Activated naive CD4-positive, alpha-beta T cell treated with anti-CD3 and anti-CD28 coated beads for 36 hours (primary cell): ENCODE measurements at regions of chr7 and their contacts with region 1.

Region 1: GRCh38 chr7:80018941-80019752 is 115.5 kb upstream of the GNAI1 start:
- DNase-seq: peak; percentile 61
- H3K4me3 Mint-ChIP-seq: no peak overlapping the region
- H3K27ac Mint-ChIP-seq: no peak overlapping the region
- H3K4me1 Mint-ChIP-seq: no peaks in the 10 kb centered on the region
- H3K27me3 Mint-ChIP-seq: no peaks in the 10 kb centered on the region

Region 2: DNA sequence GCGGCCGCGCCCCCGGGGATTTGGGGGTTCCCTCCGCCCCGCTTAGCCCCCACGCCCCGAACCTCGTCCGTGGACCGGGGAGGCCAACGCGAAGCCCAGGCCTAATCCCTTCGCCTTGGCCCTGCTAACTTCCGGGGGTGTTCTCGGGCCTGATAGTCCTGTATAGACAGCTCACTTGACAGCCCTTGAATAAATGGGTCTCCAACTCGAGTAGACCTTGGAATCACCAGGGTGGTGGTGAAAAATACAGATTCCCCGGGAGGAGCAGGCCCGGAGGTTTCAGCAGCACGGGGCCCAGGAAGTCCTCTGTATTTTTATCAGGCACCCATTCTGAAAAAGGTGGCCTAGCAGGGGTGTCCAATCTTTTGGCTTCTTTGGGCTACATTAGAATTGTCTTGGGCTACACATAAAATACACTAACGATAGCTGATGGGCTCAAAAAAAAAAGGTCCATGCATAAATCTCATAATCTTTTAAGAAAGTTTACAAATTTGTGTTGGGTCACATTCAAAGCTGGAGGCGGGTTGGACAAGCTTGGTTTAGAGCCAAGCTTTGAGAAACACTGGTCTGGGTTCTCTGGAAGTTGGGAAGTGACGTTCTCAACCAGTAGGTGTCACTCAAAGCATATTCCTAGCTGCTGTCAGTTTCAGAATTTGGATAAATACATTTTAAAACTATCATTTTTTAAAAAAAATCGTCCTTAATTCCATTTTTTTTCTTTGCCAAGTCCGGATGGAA is 1998.8 kb before region 1 on chr7:
- CTCF ChIA-PET with region 1: no interaction called
- intact Hi-C with region 1: loop called (anchors 2 kb)
- DNase-seq: peak; percentile 59
- H3K4me3 Mint-ChIP-seq: peak overlapping the region; percentile 64
- H3K27ac Mint-ChIP-seq: no peak overlapping the region
- H3K4me1 Mint-ChIP-seq: peaks cover 9% of the 10 kb centered on the region
- H3K27me3 Mint-ChIP-seq: peaks cover 32% of the 10 kb centered on the region

Region 3: DNA sequence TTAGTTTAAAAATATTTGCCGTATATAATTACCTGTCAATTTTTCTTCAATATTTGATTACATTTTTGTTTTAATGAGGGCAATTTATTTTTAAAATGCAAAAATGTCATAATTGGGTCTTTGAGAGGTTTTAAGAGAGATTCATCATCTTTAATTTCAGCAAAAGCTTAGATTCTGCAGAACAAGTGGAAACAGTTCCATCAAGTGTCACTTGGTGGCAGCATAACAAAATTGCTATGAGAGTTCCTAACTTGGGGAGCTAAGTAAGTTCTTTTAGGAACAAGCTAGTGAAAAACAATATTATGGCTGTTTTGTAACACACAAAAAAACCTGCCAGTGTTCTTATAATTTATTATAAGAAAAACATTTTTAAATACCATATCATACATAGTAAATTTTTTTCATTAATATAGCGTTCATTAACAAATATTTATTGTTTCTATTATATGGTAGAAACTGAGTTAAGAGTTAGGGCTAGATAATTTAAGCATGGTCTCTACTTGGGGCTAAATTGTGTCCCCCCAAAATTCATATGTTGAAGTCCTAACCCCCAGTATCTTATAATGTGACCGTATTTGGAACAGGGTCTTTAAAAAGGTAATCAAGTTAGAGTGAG is 720.9 kb before region 1 on chr7:
- CTCF ChIA-PET with region 1: no interaction called
- intact Hi-C with region 1: loop called (anchors 1 kb)
- DNase-seq: peak; percentile 13
- H3K4me3 Mint-ChIP-seq: no peak overlapping the region
- H3K27ac Mint-ChIP-seq: no peak overlapping the region
- H3K4me1 Mint-ChIP-seq: no peaks in the 10 kb centered on the region
- H3K27me3 Mint-ChIP-seq: no peaks in the 10 kb centered on the region

Region 4: DNA sequence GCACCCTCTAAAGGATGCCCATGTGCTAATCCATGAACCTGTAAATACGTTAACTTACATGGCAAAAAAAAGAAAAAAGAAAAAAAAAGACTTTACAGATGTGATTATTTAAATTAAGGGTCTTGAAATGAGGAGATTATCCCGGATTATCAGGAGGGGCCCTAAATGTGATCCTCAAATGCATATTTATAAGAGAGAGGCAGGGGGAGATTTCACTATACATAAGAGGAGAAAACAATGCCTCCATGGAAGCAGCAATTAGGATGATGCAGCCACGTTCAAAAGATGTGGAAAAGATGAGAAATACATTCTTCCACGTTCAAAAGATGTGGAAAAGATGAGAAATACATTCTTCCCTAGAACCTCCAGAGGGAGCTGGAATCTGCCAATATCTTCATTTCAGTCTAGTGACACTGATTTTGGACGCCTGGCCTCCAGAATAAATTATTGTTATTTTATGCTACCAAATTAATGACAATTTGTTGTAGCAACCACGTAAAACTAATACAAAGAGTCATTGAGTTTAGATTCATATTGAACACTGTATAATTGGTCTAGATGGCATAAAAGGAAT is 212.9 kb before region 1 on chr7:
- CTCF ChIA-PET with region 1: no interaction called
- intact Hi-C with region 1: loop called (anchors 5 kb)
- DNase-seq: no peak
- H3K4me3 Mint-ChIP-seq: no peak overlapping the region
- H3K27ac Mint-ChIP-seq: no peak overlapping the region
- H3K4me1 Mint-ChIP-seq: no peaks in the 10 kb centered on the region
- H3K27me3 Mint-ChIP-seq: no peaks in the 10 kb centered on the region

Region 5: GRCh38 chr7:79909176-79909575 is 110.0 kb before region 1 on chr7:
- CTCF ChIA-PET with region 1: no interaction called
- intact Hi-C with region 1: loop called (anchors 10 kb)
- DNase-seq: peak; percentile 17
- H3K4me3 Mint-ChIP-seq: no peak overlapping the region
- H3K27ac Mint-ChIP-seq: no peak overlapping the region
- H3K4me1 Mint-ChIP-seq: peaks cover 43% of the 10 kb centered on the region
- H3K27me3 Mint-ChIP-seq: no peaks in the 10 kb centered on the region

Region 6: DNA sequence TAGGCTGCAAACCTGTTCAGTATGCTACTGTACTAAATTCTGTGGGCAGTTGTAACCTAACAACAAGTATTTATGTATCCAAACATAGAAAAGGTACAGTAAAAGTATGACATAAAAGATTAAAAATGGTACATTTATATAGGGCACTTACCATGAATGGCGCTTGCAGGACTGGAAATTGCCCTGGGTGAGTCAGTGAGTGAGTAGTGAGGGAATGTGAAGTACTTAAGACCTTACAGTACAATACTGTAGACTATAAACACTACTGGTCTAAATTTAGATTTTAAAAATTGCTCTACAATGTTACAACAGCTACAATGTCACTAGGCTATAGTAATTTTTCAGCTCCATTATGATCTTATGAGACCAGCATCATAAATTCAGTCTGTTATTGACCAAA is 30.5 kb before region 1 on chr7:
- CTCF ChIA-PET with region 1: no interaction called
- intact Hi-C with region 1: no loop called
- DNase-seq: no peak
- H3K4me3 Mint-ChIP-seq: no peak overlapping the region
- H3K27ac Mint-ChIP-seq: no peak overlapping the region
- H3K4me1 Mint-ChIP-seq: no peaks in the 10 kb centered on the region
- H3K27me3 Mint-ChIP-seq: no peaks in the 10 kb centered on the region

Region 7: GRCh38 chr7:80175744-80176143 is 156.6 kb after region 1 on chr7:
- CTCF ChIA-PET with region 1: no interaction called
- intact Hi-C with region 1: no loop called
- DNase-seq: no peak
- H3K4me3 Mint-ChIP-seq: no peak overlapping the region
- H3K27ac Mint-ChIP-seq: no peak overlapping the region
- H3K4me1 Mint-ChIP-seq: peaks cover 45% of the 10 kb centered on the region
- H3K27me3 Mint-ChIP-seq: peaks cover 10% of the 10 kb centered on the region